Activated CD8-positive, alpha-beta memory T cell treated with anti-CD3 and anti-CD28 coated beads, Interleukin-2, amount 10 ng/mL, durations not matched to agents 7 days and 5 days (primary cell): ENCODE measurements at regions of chr15 and their contacts with region 1.

Region 1: DNA sequence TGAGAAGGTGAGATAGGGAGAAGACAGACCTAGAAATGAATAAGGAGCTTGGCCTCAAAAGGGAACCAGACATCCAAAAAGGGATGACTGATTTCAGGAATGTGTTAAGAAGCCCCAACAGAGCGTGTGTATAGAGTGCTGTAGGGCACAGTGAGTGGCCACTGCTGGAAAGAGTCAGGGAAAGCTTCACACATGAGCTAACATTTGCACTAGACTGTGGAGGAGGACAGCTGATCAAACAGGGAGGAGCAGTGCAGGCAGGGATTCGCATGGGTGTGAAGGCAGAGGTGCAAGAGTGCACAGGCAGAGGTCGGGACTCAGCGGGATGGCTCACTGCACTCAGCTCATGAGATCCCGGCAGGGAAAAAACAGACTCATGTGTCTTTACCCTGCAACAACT is 61.8 kb downstream of the NPTN start:
- DNase-seq: no peak
- ATAC-seq: peak; percentile 43
- H3K4me3 Mint-ChIP-seq: no peak overlapping the region
- H3K27ac Mint-ChIP-seq: peak overlapping the region; percentile 39
- H3K4me1 Mint-ChIP-seq: peaks cover 64% of the 10 kb centered on the region
- H3K27me3 Mint-ChIP-seq: no peaks in the 10 kb centered on the region

Region 2: GRCh38 chr15:73560501-73561117 is 10.7 kb before region 1 on chr15:
- CTCF ChIA-PET with region 1: interaction called, 18 read pairs
- DNase-seq: no peak
- ATAC-seq: peak; percentile 70
- H3K4me3 Mint-ChIP-seq: no peak overlapping the region
- H3K27ac Mint-ChIP-seq: no peak overlapping the region
- H3K4me1 Mint-ChIP-seq: peaks cover 23% of the 10 kb centered on the region
- H3K27me3 Mint-ChIP-seq: no peaks in the 10 kb centered on the region